ENCODE measurements at regions of chr5 and their contacts with region 1.

Region 1: DNA sequence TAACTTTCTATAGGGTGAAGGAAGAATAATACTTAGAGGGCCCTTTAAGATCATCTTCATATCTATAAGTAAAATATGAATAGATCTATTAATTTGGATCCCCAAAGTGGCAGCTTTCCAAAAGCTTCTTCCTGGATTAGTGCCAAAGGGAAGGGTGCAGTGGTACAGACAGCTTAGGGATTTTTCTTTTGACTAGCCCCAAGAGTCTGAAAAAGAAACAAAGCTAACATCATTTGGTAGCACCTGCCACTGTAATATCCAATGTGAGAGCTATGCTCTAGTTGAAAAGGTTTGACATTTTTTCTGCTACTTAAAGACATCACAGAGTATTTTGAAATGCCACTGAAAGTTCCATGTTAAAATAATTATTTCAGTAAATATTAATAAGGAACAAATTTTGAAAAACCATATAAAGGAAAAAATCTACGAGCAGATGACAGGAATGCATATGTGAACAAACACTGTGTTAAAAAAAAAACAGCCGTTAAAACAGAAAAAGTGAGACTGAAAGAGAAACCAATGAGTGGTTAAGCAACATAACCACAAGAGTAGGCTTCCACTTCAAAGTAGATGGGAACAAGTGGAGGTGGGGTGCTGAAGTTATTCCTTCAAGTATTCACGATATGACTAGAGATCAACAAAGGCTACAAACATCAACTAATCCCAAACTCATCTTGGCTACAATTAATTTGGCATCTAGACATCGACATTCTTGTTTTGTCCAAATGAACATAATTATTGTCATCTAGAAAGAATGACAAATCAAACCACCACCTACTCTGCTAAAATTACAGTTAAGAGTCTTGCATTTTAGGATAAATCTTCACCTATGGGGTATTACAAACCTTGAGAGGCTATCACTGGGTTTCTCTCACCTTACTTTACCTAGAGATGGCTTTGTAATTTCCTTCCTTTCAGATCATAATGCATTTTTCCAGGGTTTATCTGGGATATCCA is 137.5 kb downstream of the CPLANE1 start:
- DNase-seq: peak; percentile 5
- H3K4me3 ChIP-seq: no peak overlapping the region
- H3K27ac ChIP-seq: no peak overlapping the region
- H3K4me1 ChIP-seq: no peaks in the 10 kb centered on the region
- H3K27me3 ChIP-seq: no peaks in the 10 kb centered on the region
- CTCF ChIP-seq: no peak

Region 2: GRCh38 chr5:37133939-37134338 is 22.2 kb after region 1 on chr5:
- CTCF ChIA-PET with region 1: no interaction called
- POLR2A ChIA-PET with region 1: interaction called, 22 read pairs
- intact Hi-C with region 1: no loop called
- DNase-seq: peak; percentile 10
- H3K4me3 ChIP-seq: no peak overlapping the region
- H3K27ac ChIP-seq: no peak overlapping the region
- H3K4me1 ChIP-seq: no peaks in the 10 kb centered on the region
- H3K27me3 ChIP-seq: no peaks in the 10 kb centered on the region
- CTCF ChIP-seq: no peak